ENCODE measurements at regions of chr16 and their contacts with region 1.

Region 1: DNA sequence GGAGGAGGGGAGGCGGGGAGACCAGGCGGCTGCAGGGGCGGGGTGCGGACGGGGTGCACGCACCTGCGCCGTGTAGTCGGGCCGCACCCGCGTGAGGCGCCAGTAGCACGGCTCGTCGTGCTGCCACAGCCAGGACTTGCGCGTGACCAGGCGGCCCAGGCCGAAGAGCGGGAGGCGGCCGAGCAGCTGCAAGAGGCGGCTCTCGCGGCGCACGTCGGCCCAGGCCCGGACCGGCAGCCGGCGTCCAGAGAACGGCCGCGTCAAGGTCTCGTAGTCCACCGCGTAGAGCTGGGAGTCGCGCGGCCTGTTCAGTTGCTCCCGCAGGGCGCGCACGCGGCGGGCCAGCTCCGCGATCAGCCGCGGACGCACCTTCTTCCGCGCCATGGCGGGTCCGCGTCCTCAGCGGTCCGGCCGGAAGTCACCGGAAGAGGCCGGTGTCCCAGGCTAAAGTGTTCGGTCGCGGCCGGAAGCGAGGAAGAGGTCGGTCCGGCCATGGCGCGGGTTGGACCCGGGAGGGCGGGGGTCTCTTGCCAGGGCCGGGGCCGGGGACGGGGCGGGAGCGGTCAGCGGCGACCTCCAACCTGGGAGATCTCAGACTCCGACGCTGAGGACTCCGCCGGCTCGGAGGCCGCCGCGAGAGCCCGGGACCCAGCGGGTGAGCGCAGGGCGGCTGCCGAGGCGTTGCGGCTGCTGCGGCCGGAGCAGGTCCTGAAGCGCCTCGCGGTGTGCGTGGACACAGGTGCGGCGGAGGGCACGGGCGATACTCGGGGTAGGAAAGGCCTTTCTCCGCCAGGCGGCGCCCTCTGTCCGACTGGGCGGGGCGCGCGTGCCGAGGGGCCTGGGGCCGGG is at the starts of genes EME2 and MRPS34:
- DNase-seq: peak; percentile 71
- H3K4me3 ChIP-seq: peak within 1 kb of the TSS; percentile 54 to 83 (median 76)
- H3K27ac ChIP-seq: peak within 1 kb of the TSS; percentile 41
- H3K4me1 ChIP-seq: peaks cover 19% of the 10 kb centered on the region
- H3K27me3 ChIP-seq: no peaks in the 10 kb centered on the region
- CTCF ChIP-seq: peak; percentile 83 to 86
- POLR2A ChIP-seq: peak; percentile 86
- total RNA-seq, gene EME2: 15.2 and 21.4 TPM in 2 replicates
- total RNA-seq, gene MRPS34: 85.2 and 102 TPM in 2 replicates

Region 2: DNA sequence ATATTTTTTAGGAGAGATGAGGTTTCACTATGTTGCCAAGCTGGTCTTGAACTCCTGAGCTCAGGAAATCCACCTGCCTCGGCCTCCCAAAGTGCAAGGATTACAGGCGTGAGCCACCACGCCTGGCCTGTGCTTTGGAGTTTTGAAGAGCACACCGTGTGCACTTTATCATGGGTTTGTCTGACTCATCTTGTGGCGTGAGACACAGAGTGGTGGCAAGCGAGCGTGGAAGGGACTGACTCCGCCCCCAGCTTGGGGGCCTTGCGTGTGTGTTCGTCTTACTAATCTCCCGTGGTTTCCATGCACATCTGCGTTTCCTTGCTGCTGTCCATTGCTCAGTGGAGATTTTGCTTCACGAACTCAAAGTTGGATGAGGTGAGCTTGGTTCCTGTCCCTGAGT is 137.9 kb before region 1 on chr16:
- CTCF ChIA-PET with region 1: no interaction called
- POLR2A ChIA-PET with region 1: no interaction called
- dilution Hi-C with region 1: no loop called
- intact Hi-C with region 1: no loop called
- DNase-seq: no peak
- H3K4me3 ChIP-seq: no peak overlapping the region
- H3K27ac ChIP-seq: no peak overlapping the region
- H3K4me1 ChIP-seq: peaks cover 7% of the 10 kb centered on the region
- H3K27me3 ChIP-seq: no peaks in the 10 kb centered on the region
- CTCF ChIP-seq: no peak
- POLR2A ChIP-seq: no peak

Region 3: GRCh38 chr16:1826691-1827575 is 54.0 kb after region 1 on chr16 and contains the starts of genes FAHD1 and HAGH:
- CTCF ChIA-PET with region 1: interaction called, 16 read pairs
- POLR2A ChIA-PET with region 1: no interaction called
- dilution Hi-C with region 1: no loop called
- intact Hi-C with region 1: no loop called
- DNase-seq: peak; percentile 99
- H3K4me3 ChIP-seq: peak within 1 kb of the TSS; percentile 47 to 91 (median 75)
- H3K27ac ChIP-seq: peak within 1 kb of the TSS; percentile 41
- H3K4me1 ChIP-seq: peaks cover 20% of the 10 kb centered on the region
- H3K27me3 ChIP-seq: no peaks in the 10 kb centered on the region
- CTCF ChIP-seq: no peak
- POLR2A ChIP-seq: peak; percentile 87
- total RNA-seq, gene FAHD1: 27.9 and 44.8 TPM in 2 replicates
- total RNA-seq, gene HAGH: 54.3 and 56.4 TPM in 2 replicates